Activated CD4-positive, alpha-beta memory T cell treated with anti-CD3 and anti-CD28 coated beads for 36 hours (primary cell): ENCODE measurements at regions of chr1 and their contacts with region 1.

Region 1: DNA sequence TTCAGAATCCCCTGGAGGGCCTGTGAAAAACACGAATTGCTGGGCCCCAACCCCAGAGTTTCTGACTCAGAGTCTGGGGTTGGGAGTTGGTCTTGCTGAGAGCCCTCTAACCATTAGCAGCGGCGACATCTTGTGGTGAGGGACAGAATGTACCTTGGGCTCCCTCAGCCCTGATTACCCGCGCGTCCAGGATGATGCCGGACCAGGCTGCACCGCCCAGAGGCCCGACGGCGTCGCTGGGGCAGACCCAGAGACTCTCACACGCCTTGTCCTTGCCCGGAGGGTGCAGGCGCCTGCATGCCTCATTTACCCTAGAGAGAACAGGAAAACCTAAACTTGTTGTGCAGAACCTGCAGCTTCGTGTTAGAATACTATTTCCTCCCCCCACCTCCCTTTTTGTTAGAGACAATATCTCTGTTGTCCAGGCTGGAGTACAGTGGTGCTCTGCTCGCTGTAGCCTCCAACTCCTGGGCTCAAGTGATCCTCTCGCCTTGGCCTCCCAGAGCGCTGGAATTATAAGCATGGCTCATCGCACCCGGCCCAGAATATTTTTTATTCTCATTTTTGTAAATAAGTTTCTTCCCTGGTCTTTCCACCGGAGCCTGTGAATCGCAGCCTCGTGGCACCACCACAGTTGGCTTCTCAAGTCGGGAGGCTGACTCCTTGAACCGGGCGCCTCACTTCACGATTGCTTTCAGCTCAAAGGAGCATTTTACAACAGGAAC is 22.2 kb upstream of the RD3 start:
- DNase-seq: peak; percentile 88
- H3K4me3 Mint-ChIP-seq: peak overlapping the region; percentile 56
- H3K27ac Mint-ChIP-seq: no peak overlapping the region
- H3K4me1 Mint-ChIP-seq: peaks cover 23% of the 10 kb centered on the region
- H3K27me3 Mint-ChIP-seq: no peaks in the 10 kb centered on the region

Region 2: GRCh38 chr1:210584439-210585113 is 929.6 kb before region 1 on chr1:
- CTCF ChIA-PET with region 1: interaction called, 7 read pairs
- POLR2A ChIA-PET with region 1: no interaction called
- intact Hi-C with region 1: loop called (anchors 2 kb)
- DNase-seq: peak; percentile 85
- H3K4me3 Mint-ChIP-seq: no peak overlapping the region
- H3K27ac Mint-ChIP-seq: no peak overlapping the region
- H3K4me1 Mint-ChIP-seq: no peaks in the 10 kb centered on the region
- H3K27me3 Mint-ChIP-seq: peaks cover 3% of the 10 kb centered on the region

Region 3: GRCh38 chr1:211198111-211198510 is 316.1 kb before region 1 on chr1:
- CTCF ChIA-PET with region 1: no interaction called
- POLR2A ChIA-PET with region 1: no interaction called
- intact Hi-C with region 1: no loop called
- DNase-seq: no peak
- H3K4me3 Mint-ChIP-seq: no peak overlapping the region
- H3K27ac Mint-ChIP-seq: no peak overlapping the region
- H3K4me1 Mint-ChIP-seq: no peaks in the 10 kb centered on the region
- H3K27me3 Mint-ChIP-seq: no peaks in the 10 kb centered on the region

Region 4: GRCh38 chr1:211258756-211259637 is 255.2 kb before region 1 on chr1 and contains the start of gene RCOR3:
- CTCF ChIA-PET with region 1: interaction called, 4 read pairs
- POLR2A ChIA-PET with region 1: interaction called, 3 read pairs
- intact Hi-C with region 1: loop called (anchors 1 kb)
- DNase-seq: peak; percentile 95
- H3K4me3 Mint-ChIP-seq: peak within 1 kb of the TSS; percentile 83
- H3K27ac Mint-ChIP-seq: peak within 1 kb of the TSS; percentile 93
- H3K4me1 Mint-ChIP-seq: peaks cover 16% of the 10 kb centered on the region
- H3K27me3 Mint-ChIP-seq: no peaks in the 10 kb centered on the region
- total RNA-seq, gene RCOR3: 30.2 to 32.7 TPM

Region 5: GRCh38 chr1:211420389-211420788 is 93.8 kb before region 1 on chr1:
- CTCF ChIA-PET with region 1: no interaction called
- POLR2A ChIA-PET with region 1: no interaction called
- intact Hi-C with region 1: loop called (anchors 1 kb)
- DNase-seq: peak; percentile 36
- H3K4me3 Mint-ChIP-seq: no peak overlapping the region
- H3K27ac Mint-ChIP-seq: no peak overlapping the region
- H3K4me1 Mint-ChIP-seq: peaks cover 19% of the 10 kb centered on the region
- H3K27me3 Mint-ChIP-seq: no peaks in the 10 kb centered on the region

Region 6: GRCh38 chr1:211476200-211476849 is 37.9 kb before region 1 on chr1:
- CTCF ChIA-PET with region 1: interaction called, 24 read pairs
- POLR2A ChIA-PET with region 1: no interaction called
- intact Hi-C with region 1: loop called (anchors 1 kb)
- DNase-seq: peak; percentile 84
- H3K4me3 Mint-ChIP-seq: no peak overlapping the region
- H3K27ac Mint-ChIP-seq: no peak overlapping the region
- H3K4me1 Mint-ChIP-seq: no peaks in the 10 kb centered on the region
- H3K27me3 Mint-ChIP-seq: peaks cover 15% of the 10 kb centered on the region